Sciatic nerve (tissue), 2 donors: ENCODE measurements at regions of chr2 and their contacts with region 1.

Region 1: DNA sequence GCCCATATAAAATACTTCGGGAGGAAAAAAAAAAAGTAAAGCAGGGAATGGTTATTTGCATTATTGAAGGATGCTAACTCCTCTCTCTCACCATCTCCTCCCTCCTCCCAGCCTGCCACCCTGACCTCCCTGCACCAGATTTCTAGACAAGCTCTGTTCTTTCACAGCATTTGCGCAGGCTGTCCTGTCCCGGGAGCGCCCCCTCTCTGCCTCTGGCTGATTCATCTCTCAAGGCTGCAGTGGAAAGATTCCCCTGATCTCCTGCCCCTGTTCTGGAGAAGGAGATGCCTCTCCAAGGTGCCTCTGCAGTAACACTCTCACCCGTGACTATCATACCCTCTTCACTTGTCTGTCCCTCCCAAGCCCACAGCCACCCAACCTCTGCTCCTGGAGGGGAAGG is 38.5 kb downstream of the COL4A4 start:
- DNase-seq: no peak
- ATAC-seq: no peak

Region 2: DNA sequence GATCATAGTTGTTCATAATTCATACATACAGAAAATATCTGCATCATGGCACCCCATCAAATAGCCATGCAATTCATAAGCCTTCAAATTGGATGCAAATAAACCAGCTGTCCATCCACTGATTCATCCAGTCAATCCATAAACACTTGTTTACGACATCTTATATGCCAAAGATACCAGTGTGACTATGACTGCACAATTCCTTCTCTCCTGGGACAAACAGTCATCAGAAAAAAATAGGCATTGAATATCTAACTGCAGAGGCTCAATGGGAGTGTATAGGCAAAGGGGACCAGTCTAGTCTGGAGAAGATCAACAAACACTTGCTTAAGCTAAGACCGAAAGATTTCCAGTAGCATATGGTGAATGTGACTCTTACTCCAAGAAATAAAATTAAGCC is 108.9 kb after region 1 on chr2:
- intact Hi-C with region 1: loop called (anchors 5 kb)
- DNase-seq: no peak
- ATAC-seq: no peak